ENCODE measurements at regions of chr2 and their contacts with region 1.

Region 1: DNA sequence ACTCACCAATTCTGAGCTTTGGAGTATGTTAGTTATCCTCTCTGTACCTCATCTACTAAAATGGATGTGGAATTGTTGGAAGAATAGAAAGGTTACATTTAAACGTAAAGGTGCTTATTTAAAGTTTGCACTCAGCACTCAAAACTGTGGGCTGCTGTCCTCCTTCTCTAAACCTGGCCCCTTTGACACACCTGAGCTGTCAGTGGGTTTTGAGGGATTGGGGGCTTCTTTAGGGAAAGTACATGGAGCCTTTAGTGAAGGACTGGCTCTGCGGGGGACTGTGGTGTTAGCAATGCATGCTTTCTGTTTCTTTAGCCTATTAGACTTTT is 47.2 kb downstream of the TET3 start:
- DNase-seq: no peak
- ATAC-seq: no peak
- H3K4me3 ChIP-seq: peak overlapping the region; percentile 6
- H3K4me3 Mint-ChIP-seq: peak overlapping the region; percentile 92
- H3K27ac ChIP-seq: peak overlapping the region; percentile 96
- H3K27ac Mint-ChIP-seq: peak overlapping the region; percentile 96 to 98
- H3K4me1 ChIP-seq: peaks cover 51% of the 10 kb centered on the region
- H3K4me1 Mint-ChIP-seq: peaks cover 79 to 80% of the 10 kb centered on the region in 2 donors
- H3K27me3 ChIP-seq: no peaks in the 10 kb centered on the region
- H3K27me3 Mint-ChIP-seq: no peaks in the 10 kb centered on the region
- CTCF ChIP-seq: no peak

Region 2: GRCh38 chr2:74017223-74017622 is 14.7 kb before region 1 on chr2:
- intact Hi-C with region 1: loop called (anchors 1 kb)
- DNase-seq: peak in 1 of 2 donors; percentile 37
- ATAC-seq: peak; percentile 88 to 100 (median 97)
- H3K4me3 ChIP-seq: no peak overlapping the region
- H3K4me3 Mint-ChIP-seq: peak overlapping the region; percentile 19
- H3K27ac ChIP-seq: no peak overlapping the region
- H3K27ac Mint-ChIP-seq: peak overlapping the region; percentile 37 to 68
- H3K4me1 ChIP-seq: peaks cover 28% of the 10 kb centered on the region
- H3K4me1 Mint-ChIP-seq: peaks cover 46 to 49% of the 10 kb centered on the region in 2 donors
- H3K27me3 ChIP-seq: no peaks in the 10 kb centered on the region
- H3K27me3 Mint-ChIP-seq: no peaks in the 10 kb centered on the region
- CTCF ChIP-seq: no peak

Region 3: GRCh38 chr2:74162951-74163350 is 131.0 kb after region 1 on chr2:
- intact Hi-C with region 1: no loop called
- DNase-seq: no peak
- ATAC-seq: no peak
- H3K4me3 ChIP-seq: no peak overlapping the region
- H3K4me3 Mint-ChIP-seq: no peak overlapping the region
- H3K27ac ChIP-seq: no peak overlapping the region
- H3K27ac Mint-ChIP-seq: peak overlapping the region in 1 of 2 donors; percentile 14
- H3K4me1 ChIP-seq: no peaks in the 10 kb centered on the region
- H3K4me1 Mint-ChIP-seq: peaks cover 7 to 8% of the 10 kb centered on the region in 2 donors
- H3K27me3 ChIP-seq: no peaks in the 10 kb centered on the region
- H3K27me3 Mint-ChIP-seq: no peaks in the 10 kb centered on the region
- CTCF ChIP-seq: no peak

Measured in natural killer cell (primary cell).